AG04449 (cell line): ENCODE measurements at regions of chr3 and their contacts with region 1.

Region 1: DNA sequence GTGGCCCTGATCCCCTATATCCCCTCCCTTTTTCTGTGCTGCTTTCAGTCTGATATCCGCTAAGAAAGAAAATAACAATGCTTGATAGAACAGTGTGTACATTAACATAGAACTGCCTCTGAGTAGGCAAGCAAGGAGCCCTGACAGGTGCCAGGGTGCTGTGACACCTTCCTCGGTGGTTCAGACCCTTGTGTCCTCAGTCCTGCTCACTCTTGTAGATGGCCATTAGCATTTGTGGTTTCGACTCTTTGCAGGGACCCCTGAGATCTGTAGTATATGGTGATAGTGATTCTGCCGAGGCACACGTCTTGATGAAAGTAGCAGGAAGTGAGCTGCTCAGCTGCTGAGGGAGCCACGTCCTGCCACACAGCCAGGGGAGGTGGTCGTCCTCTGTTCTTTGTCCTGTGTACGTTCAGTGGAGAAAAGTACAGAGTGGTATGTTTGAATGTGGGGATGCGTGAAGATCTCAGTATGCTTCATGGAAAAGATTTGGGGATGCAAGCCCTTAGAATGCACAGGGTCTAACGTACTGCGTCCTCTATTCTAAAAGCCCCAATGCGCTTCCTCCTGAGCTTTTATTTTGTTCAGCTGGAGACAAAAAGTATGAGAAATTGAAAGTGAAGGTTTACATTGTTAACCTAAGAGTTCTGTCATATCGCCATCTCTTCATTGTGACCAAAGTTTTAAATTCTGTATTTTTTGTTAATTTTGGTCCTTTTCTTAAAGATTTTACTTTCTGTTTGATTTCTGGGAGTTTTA is 35.4 kb downstream of the PXYLP1 start:
- DNase-seq: no peak
- H3K4me3 ChIP-seq: no peak overlapping the region
- CTCF ChIP-seq: no peak

Region 2: DNA sequence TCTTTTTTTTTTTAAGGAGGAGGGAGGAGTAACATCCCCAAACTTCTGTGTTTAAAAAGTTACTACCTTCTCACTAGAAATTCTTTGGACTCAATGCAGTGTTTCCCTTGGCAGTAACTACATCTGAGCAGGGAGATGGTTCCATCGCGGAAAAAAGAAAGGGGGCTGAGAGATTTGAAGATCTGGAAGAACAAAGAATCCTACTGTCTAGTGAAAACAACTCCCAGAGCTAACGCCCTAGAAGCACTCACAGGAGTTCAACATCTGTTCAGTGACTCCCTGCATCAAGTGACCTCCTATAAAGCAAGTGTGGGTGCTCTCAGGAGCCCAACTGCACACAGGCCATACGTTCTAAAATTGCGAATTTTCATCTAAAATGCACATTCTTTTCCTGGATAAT is 102.1 kb before region 1 on chr3:
- CTCF ChIA-PET with region 1: no interaction called
- POLR2A ChIA-PET with region 1: no interaction called
- DNase-seq: no peak
- H3K4me3 ChIP-seq: no peak overlapping the region
- CTCF ChIP-seq: no peak

Region 3: DNA sequence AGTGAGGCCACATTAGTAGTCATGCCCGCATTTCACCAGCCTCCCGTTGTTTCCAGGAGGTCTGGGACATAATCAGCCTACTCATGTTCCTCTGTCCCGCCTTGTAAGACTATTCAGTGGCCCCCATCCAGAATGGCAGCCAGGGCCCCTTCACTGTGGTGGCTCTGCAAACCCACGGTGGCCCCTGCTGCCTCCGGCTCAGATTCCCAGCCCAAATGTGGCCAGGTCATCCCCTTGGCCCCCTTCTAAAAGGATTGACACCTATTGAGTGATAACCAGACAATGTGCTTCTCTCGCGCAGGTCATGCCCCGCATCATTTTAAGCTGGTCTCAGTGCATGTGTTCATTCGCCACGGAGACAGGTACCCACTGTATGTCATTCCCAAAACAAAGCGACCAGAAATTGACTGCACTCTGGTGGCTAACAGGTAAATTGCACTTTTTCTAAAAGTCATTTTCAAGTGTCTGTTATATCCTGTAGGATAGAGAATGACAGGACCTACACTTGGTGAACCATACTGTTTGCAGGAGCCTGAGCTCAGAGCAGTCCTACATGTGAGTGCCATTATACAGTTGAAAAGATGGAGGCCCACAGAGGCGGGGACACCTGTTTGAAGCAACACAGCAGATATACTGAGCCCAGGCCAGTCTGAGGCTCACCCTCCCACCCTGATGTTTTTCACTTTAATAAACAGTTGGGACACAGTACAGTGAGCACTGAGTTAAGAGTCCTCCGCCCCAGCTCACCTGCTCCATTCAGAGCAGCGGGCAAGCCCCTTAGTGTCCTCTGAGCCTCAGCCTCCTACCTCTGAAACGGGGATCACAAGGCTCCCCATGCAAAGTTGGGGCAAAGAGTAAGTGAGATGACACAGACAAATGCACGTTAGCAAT is 12.3 kb after region 1 on chr3:
- CTCF ChIA-PET with region 1: interaction called, 10 read pairs
- POLR2A ChIA-PET with region 1: no interaction called
- DNase-seq: no peak
- H3K4me3 ChIP-seq: no peak overlapping the region
- CTCF ChIP-seq: peak; percentile 31

Region 4: DNA sequence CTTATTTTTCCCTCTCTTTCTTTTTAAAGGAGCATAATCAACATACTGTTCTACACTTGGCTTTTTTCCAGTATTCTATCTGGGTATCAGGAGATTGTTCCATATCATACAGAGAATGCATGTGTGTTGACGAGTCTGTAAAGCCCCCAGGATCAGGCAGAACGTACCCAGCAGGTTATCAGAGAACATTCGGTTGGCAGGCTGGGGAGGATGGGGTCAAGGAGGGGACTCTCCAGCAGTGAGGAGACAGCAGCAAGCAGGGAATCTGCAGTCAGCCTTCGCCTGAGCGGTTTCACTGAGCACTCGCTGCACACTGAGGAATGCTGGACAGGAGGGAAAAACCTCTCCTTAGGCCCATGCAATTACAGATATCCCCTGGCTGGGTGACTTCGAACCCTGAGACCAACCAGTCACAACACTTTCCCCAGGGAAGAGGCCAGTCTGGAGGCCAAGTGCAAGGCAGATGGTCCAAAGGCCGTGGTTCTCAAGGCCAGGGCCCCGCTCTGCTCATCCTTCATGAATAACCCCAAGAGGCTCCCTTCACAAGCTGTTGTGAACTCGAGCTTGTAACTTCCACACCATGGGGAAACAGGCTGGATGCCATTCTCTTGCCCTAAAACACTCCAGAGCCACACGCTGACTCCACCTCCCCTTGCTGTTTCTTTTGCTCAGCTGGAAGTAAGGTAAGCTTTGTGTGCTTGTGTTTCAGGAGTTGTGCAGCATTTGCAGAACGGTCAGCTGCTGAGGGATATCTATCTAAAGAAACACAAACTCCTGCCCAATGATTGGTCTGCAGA is 24.8 kb after region 1 on chr3:
- CTCF ChIA-PET with region 1: no interaction called
- POLR2A ChIA-PET with region 1: no interaction called
- DNase-seq: no peak
- H3K4me3 ChIP-seq: no peak overlapping the region
- CTCF ChIP-seq: no peak